ENCODE measurements at regions of chr11 and their contacts with region 1.

Region 1: GRCh38 chr11:95067039-95067840 is 521 bp downstream of the SRSF8 start:
- DNase-seq: peak; percentile 90

Region 2: DNA sequence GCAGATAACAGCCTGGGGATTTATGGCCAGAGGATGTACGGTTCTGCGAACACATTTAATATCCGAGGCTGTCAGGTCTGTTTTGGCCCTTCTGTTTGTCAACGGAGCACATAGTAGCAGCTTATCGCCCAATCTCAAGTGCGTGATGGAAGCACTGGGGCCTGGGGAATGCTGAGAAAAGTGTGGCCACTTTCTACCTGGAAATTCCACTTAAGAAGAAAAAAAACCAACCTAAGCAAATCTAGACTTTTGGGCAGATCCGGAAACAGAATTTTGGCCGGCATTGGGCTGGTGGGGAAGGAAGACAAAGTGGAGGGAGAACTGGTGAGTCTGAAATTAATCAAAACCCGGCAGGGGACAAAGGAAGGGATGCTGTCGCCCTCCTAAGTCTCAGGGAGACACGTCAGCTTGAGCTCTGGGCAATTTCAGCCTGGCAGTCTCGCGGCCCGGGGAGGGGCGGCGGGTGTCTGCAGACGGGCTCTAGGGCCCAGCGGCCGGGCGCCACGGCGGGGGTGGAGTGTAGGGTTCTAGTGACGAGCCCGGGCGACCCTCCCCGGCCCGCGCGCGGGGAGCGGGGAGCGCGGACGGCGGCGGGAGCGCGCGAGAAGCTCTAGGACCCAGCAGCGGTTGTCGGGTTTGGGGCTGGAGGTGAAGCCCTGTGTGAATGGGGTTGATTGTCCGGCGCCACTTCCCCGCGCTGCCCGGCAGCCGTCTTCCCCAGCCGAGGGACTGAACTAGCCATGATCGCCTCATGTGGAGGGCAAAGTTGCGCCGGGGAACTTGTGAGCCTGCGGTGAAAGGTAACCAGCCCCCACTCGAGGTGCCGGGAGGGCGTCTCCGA is 299.3 kb before region 1 on chr11 and contains the start of gene AMOTL1:
- intact Hi-C with region 1: loop called (anchors 10 kb)
- DNase-seq: peak; percentile 93
- total RNA-seq, gene AMOTL1: 60.1 TPM

Region 3: GRCh38 chr11:94909371-94909820 is 157.8 kb before region 1 on chr11:
- intact Hi-C with region 1: no loop called
- DNase-seq: no peak

Region 4: GRCh38 chr11:94973099-94973968 is 93.9 kb before region 1 on chr11 and contains the starts of genes CWC15 and KDM4D:
- intact Hi-C with region 1: loop called (anchors 10 kb)
- DNase-seq: peak; percentile 98
- total RNA-seq, gene CWC15: 57.8 TPM
- total RNA-seq, gene KDM4D: 0.83 TPM

Region 5: DNA sequence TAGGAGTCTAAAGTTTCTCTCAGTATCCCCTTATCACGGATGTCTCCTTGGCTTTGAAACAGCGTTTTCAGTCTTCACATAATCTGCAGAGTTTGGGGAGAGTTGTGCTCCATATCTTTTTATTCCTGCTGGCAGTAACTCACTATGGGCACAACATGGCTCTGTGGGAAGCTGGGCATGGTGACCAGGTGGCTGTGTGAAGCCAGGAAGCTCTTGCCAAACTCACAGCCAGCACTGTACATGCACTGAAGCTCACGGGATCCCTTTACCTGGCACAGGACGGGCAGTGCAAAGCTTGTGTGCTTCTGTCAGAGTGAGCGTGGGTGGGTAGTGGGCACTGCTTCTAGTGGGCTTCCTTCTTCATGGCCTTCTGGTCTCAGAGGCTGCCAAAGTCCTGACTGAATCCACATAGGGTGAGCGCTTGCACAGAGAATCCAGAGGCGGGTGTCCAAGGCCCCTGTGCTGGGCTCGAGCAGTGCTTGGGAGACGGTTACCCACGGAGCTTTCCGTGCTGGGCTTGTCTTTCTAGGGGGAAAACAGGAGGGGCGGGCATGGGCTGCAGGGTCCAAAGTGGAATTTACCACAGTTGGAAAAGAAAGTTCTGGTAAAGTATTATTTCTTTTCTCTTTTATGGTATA is 52.9 kb before region 1 on chr11:
- intact Hi-C with region 1: no loop called
- DNase-seq: no peak

Region 6: DNA sequence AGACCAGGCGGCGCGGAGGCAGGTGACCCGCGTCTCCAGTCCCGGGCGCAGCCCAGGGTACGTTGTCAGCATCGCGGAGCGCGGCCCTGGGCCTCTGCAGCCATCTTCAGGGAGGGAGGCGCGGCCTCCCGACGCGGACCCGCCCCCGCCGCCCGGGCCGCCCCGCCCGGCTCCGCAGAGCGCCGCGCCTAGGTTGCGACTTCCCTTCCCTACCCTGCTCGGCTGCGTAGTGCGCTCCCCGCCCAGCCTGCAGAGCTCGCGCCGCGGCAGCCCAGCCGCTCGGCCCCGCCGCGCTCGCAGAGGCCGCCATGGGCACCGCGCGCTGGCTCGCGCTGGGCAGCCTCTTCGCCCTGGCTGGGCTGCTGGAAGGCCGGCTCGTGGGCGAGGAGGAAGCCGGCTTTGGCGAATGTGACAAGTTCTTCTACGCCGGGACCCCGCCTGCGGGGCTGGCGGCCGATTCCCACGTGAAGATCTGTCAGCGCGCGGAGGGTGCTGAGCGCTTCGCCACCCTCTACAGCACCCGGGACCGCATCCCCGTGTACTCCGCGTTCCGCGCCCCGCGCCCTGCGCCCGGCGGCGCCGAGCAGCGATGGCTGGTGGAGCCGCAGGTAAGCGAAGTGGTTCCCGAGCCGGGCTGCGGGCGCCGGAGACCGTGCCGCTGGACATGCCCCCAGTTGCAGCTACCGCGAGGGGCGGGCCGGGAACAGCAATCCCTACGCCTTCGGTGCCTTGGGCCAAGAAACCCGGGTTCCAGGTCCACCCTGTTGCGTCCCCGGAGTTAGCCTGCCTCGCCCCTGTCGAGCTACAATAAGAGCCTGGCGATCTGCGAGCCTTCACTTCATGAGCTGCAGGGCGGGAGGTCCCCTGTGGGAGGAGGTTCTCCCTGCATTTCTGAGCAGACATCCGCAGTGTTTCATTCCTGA is 22.6 kb after region 1 on chr11 and contains the start of gene ENDOD1:
- intact Hi-C with region 1: loop called (anchors 2 kb)
- DNase-seq: peak; percentile 92
- total RNA-seq, gene ENDOD1: 13.3 TPM

Region 7: GRCh38 chr11:95182397-95182796 is 115.2 kb after region 1 on chr11:
- intact Hi-C with region 1: no loop called
- DNase-seq: no peak

Region 8: GRCh38 chr11:95705485-95706124 is 638.4 kb after region 1 on chr11:
- intact Hi-C with region 1: loop called (anchors 5 kb)
- DNase-seq: peak; percentile 90

Measured in cardiac septum (tissue), 1 donor.